Left cardiac atrium (tissue), 4 donors: ENCODE measurements at regions of chr1 and their contacts with region 1.

Region 1: GRCh38 chr1:56584910-56585528 is 5.7 kb upstream of the PLPP3 start:
- DNase-seq: no peak
- ATAC-seq: peak; percentile 44 to 54

Region 2: GRCh38 chr1:55277377-55278130 is 1307.5 kb before region 1 on chr1:
- intact Hi-C with region 1: loop called in 1 of 2 experiments (anchors 5 kb)
- DNase-seq: peak; percentile 88
- ATAC-seq: peak; percentile 91 to 92

Region 3: GRCh38 chr1:55284852-55285251 is 1300.2 kb before region 1 on chr1:
- intact Hi-C with region 1: loop called in 1 of 2 experiments (anchors 2 kb)
- DNase-seq: peak; percentile 26
- ATAC-seq: peak; percentile 76 to 80

Region 4: DNA sequence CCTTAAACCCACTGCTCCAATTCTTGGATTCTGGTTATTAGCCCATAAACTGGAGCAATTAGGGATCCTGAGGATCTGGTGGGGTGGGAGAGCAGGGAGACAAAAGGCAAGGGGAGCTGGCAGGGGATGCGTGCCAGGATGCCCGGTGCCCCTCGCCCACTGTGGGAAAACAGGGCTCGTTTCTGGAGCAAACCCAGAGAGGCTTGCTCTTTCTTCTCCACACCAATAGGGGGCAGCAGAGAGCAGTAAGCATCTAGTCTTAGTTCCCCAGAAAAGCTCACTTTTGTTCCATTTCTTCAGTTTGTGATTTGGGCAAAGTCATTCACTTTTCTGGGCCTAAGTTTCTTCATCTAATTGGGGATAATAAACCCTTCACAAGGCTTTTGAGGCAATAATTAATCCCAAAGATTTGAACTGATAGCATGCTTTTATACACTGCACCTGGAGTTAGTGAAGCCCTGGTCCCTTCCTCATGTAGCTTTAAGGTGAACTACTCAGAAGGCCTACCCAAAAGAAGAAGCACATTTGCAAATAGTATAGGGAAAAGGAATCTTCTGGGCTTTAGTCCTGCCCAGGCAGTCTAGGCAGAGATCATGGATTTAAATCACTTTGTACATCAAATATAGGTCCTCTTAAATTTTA is 1209.3 kb before region 1 on chr1:
- intact Hi-C with region 1: loop called (anchors 5 kb)
- DNase-seq: no peak
- ATAC-seq: peak in 1 of 2 donors; percentile 56

Region 5: DNA sequence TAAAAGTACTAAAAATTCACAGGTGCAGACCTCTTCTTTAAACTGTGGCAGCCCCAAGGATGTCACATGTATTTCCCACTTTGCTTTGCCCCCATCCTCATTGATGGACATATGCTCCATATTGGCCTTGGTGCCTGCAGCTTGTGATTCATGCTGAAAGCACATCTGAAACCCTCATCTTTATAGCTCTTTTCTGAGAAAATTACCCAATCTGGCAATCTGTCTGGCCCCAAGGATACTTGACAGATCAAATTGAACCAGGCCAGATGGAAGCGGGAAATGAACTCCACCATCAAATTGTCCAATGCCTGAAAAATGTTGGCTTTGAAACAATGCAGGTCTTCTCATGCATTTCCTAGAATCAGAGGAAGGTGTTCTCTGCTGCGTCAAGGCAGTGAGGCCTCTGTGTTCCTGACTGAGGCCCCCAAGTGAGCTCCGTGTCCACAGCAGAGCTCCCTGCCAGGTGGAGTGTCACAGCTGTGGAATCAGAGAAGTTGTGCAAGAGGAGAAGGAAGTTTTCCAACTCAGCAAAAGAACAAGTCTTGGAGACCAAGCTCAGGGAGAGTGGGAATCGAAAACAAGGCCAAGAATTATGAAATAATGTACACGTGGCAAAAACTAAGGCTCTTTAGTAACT is 329.4 kb before region 1 on chr1:
- intact Hi-C with region 1: loop called in 1 of 2 experiments (anchors 10 kb)
- DNase-seq: peak; percentile 81
- ATAC-seq: peak; percentile 86 to 89

Region 6: DNA sequence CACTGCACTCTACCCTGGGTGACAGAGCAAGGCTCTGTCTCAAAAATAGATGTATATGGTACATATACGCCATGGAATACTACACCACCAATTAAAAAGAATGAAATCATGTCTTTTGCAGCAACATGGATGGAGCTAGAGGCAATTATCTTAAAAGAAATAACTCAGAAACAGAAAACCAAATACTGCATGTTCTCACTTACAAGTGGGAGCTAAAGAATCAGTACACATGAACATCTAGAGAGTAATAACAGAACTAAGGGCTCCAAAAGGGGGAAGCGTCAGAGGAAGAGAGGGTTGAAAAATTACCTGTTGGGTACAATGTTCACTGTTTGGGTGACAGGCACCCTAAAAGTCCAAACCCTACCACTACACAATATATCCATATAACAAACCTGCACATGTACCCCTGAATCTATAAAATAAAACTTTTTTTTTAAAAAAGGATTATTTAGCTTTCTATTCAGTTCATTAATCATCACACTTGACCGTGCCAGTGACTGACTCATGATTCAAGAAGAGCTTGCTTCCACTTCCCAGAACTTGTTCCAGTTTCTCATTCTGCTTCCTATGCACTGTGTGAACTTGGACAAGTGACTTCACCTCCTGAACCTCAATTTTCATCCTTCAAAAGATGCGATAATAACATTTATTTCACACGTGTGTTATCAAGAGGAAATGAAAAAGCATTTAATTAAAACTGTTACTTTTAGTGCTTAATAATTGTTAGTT is 115.2 kb before region 1 on chr1:
- intact Hi-C with region 1: no loop called
- DNase-seq: no peak
- ATAC-seq: peak; percentile 51 to 86

Region 7: GRCh38 chr1:56539520-56539931 is 45.5 kb before region 1 on chr1:
- intact Hi-C with region 1: no loop called
- DNase-seq: no peak
- ATAC-seq: no peak